BJ (cell line): ENCODE measurements at regions of chr7 and their contacts with region 1.

Region 1: DNA sequence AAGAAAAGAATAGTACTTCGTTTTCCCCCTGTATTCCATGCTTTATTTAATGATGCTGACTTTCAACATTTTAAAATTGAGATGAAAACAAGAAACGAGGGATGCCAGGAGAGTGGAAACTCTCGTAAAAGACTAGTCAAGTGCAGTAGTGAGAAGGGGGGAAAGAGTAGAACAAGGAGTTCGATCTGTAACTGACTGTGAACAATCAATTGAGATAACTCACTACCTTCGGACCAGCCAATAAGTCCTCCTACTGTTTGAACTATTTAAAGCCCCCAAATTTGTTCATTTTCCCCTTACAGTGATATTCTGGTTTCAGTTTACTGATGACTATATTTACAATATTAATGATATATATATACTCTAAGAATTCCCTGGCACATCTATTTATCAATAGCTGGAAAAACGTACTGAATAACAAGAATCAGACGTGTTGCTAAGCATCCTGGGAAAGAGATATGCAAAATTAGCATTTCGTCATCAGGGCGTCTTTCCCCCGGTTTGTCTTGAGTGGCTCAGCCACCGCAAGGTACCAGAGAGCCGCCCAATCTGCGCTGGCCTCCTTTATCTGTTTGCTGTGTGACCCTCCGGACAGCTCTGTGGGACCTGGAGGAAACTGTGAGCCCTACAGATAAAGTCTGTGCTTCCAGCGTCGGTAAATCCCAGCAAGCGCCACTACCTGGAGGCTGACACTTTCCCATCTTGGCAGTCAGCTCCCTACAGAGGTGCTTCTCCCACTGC is 41.1 kb downstream of the PDIA4 start:
- DNase-seq: peak; percentile 50
- H3K4me3 ChIP-seq: peak overlapping the region; percentile 69
- H3K27me3 ChIP-seq: peaks cover 2% of the 10 kb centered on the region; the same call in 1 of the 2 replicates
- CTCF ChIP-seq: no peak

Region 2: DNA sequence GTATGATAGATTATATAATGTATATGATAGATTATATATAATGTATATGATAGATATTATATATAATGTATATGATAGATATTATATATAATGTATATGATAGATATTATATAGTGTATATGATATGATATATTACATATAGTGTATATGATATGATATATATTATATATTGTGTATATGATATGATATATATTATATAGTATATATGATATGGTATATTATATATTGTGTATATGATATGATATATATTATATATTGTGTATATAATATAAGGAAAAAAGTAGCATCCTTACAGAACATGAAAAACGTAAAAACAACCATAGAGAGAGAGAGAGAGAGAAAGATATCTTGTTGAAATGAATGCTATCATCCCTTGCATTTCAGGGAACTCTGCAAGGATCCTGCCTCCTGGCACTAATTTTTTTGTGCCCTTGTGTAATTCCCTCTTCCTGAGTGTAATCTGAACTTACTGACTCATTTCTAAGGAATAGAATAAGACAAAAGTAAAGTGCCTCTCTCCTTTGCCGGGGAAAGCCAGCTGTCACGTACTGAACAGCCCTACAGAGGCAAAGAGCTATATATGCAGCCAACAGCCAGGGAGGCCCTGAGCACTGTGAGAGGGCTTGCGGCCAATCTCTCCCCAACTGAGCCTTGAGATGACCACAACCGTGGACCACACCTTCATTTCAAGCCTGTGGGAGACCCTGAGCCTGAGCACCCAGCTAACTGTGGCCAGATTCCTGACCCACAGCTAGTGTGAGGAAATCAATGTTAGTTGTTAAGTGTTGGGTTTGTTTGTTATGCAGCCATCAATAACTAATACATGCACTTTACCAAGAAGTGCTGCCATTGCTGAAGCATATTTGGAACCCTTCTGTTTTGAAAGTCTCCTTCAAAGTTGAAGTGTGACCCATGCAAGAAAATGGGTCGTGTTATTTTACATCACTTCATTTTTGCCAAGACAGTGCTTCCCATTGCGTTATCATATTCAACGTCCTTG is 41.9 kb before region 1 on chr7:
- CTCF ChIA-PET with region 1: no interaction called
- POLR2A ChIA-PET with region 1: interaction called, 19 read pairs
- DNase-seq: no peak
- H3K4me3 ChIP-seq: no peak overlapping the region
- H3K27me3 ChIP-seq: no peaks in the 10 kb centered on the region
- CTCF ChIP-seq: no peak

Region 3: DNA sequence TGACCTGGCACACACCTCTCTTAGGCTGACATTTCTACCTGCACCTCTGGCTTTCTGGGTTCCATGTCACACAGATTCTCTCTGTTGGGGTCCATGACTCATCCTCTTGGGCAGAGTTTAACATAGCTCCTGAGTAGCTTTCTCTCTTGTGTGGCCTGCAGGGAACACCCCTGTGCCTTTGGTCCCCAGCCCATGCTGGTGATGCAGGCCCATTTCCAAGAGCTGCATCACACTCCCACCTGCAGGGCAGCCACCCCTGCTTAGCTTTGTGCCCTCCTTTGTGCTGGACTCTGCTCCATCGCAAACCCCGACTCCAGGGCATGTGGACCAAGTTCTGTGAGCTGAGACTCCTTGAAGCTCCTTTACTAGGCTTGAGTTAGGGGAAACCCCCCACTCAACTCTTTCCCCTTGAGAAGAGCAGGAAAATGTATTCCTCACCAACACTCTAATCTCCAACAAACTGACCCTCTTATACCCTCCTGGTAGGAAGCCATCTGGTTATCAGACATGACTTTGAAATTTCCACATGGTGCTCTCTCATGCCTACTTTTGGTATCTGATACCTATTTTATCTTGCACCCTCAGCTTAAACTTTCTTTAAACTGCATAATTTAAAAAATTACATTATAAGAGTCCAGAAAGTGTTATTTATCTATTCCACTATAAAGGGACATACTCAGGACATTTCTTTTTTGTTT is 380.5 kb after region 1 on chr7:
- CTCF ChIA-PET with region 1: no interaction called
- POLR2A ChIA-PET with region 1: no interaction called
- DNase-seq: no peak
- H3K4me3 ChIP-seq: no peak overlapping the region
- H3K27me3 ChIP-seq: no peaks in the 10 kb centered on the region
- CTCF ChIP-seq: no peak